ENCODE measurements at regions of chr12 and their contacts with region 1.

Region 1: DNA sequence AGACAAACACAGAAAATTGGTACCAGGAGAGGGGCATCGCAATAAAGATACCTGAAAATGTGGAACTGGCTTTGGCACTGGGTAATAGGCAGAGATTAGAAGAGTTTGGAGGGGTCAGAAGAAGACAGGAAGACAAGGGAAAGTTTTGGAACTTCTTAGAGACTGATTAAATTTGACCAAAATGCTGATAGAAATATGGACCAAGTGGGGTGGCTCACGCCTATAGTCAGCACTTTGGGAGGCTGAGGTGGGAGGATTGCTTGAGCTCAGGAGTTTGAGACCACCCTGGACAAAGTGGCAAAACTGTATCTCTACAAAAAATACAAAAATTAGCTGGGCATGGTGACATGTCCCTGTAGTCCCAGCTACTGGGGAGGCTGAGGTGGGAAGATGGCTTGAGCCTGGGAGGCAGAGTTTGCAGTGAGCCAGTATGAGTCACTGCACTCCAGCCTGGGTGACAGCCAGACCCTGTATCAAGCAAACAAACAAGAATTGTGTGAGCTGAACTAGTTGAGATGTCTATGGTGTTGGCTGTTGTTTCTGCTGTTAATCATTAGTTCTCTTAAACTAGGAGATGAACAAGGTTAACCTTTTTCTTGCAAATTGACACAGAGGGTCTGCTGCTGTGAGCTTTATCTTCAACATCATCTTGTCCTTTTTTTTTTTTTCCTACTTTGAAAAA is 23.5 kb downstream of the RASSF3 start:
- DNase-seq: peak in 1 of 2 donors; percentile 53
- ATAC-seq: peak in 7 of 8 donors; percentile 35 to 91 (median 58)
- H3K4me3 ChIP-seq: no peak overlapping the region
- H3K27ac ChIP-seq: peak overlapping the region in 1 of 10 donors; percentile 26
- H3K4me1 ChIP-seq: peaks cover 2 to 68% (median 24%) of the 10 kb centered on the region in 9 donors
- H3K27me3 ChIP-seq: no peaks in the 10 kb centered on the region
- CTCF ChIP-seq: no peak

Region 2: DNA sequence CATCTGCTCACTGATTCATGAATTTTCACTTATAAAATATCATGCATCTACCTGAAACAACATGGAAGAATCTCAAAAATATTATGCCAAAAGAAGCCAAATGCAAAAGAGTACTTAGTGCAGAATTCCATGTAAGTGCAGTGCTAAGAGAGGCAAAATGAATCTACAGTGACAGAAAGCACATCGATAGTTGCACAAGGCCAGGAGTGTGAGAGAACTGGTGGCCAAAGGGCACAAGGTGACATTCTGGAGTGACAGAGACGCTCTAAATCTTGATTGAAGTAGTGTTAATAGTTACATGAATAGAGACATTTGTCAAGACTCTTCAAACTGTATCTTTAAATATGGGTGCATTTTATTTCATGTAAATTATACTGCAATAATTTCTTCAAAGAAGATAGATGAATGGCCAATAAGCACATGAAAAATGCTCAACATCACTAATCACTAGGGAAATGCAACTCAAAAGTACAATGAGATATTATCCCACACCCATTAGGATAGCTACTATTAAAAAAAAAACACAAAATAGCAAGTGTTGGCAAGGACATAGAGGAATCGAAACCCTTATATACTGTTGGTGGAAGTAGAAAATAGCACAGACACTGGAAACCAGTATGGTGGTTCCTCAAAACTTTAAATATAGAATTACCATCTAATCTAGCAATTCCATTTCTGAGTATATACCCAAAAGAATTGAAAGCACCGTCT is 340.0 kb before region 1 on chr12:
- intact Hi-C with region 1: no loop called
- DNase-seq: no peak
- ATAC-seq: peak in 2 of 8 donors; percentile 28 to 30
- H3K4me3 ChIP-seq: no peak overlapping the region
- H3K27ac ChIP-seq: no peak overlapping the region
- H3K4me1 ChIP-seq: no peaks in the 10 kb centered on the region
- H3K27me3 ChIP-seq: no peaks in the 10 kb centered on the region
- CTCF ChIP-seq: no peak

Region 3: GRCh38 chr12:64656429-64656828 is 22.6 kb after region 1 on chr12:
- intact Hi-C with region 1: no loop called
- DNase-seq: no peak
- ATAC-seq: no peak
- H3K4me3 ChIP-seq: no peak overlapping the region
- H3K27ac ChIP-seq: peak overlapping the region in 3 of 10 donors; percentile 26 to 37 (median 30)
- H3K4me1 ChIP-seq: peaks cover 2 to 80% (median 41%) of the 10 kb centered on the region in 9 donors
- H3K27me3 ChIP-seq: no peaks in the 10 kb centered on the region
- CTCF ChIP-seq: no peak

Region 4: GRCh38 chr12:64669270-64669842 is 35.6 kb after region 1 on chr12:
- intact Hi-C with region 1: loop called in 1 of 10 experiments (anchors 5 kb)
- DNase-seq: peak; percentile 56 to 70
- ATAC-seq: peak; percentile 39 to 70 (median 66)
- H3K4me3 ChIP-seq: peak overlapping the region in 5 of 10 donors; percentile 4 to 25 (median 8)
- H3K27ac ChIP-seq: peak overlapping the region; percentile 10 to 89 (median 76)
- H3K4me1 ChIP-seq: peaks cover 38 to 100% (median 97%) of the 10 kb centered on the region in 9 donors
- H3K27me3 ChIP-seq: no peaks in the 10 kb centered on the region
- CTCF ChIP-seq: no peak

Measured in heart right ventricle (tissue), 16 donors.